Gastrocnemius medialis (tissue), 4 donors: ENCODE measurements at regions of chr6 and their contacts with region 1.

Region 1: GRCh38 chr6:139134817-139135581 is at the start of gene HECA:
- DNase-seq: peak; percentile 94 to 95
- ATAC-seq: peak; percentile 88 to 89
- H3K4me3 ChIP-seq: peak within 1 kb of the TSS; percentile 84 to 93 (median 88)
- H3K27ac ChIP-seq: peak within 1 kb of the TSS; percentile 92 to 96 (median 94)
- H3K4me1 ChIP-seq: peaks cover 34 to 37% of the 10 kb centered on the region in 2 donors
- H3K27me3 ChIP-seq: no peaks in the 10 kb centered on the region
- CTCF ChIP-seq: peak in 1 of 5 experiments; percentile 5
- POLR2A ChIP-seq: peak; percentile 88 to 97
- total RNA-seq, gene HECA: 34.5 to 59.1 (median 47.2) TPM

Region 2: GRCh38 chr6:139029470-139030210 is 105.4 kb before region 1 on chr6:
- in situ Hi-C with region 1: no loop called
- intact Hi-C with region 1: loop called (anchors 5 kb)
- DNase-seq: peak; percentile 20 to 34
- ATAC-seq: peak; percentile 51 to 73
- H3K4me3 ChIP-seq: peak overlapping the region; percentile 81 to 96 (median 89)
- H3K27ac ChIP-seq: peak overlapping the region; percentile 17 to 70 (median 62)
- H3K4me1 ChIP-seq: peaks cover 0 to 7% of the 10 kb centered on the region in 2 donors
- H3K27me3 ChIP-seq: no peaks in the 10 kb centered on the region
- CTCF ChIP-seq: no peak
- POLR2A ChIP-seq: no peak

Region 3: DNA sequence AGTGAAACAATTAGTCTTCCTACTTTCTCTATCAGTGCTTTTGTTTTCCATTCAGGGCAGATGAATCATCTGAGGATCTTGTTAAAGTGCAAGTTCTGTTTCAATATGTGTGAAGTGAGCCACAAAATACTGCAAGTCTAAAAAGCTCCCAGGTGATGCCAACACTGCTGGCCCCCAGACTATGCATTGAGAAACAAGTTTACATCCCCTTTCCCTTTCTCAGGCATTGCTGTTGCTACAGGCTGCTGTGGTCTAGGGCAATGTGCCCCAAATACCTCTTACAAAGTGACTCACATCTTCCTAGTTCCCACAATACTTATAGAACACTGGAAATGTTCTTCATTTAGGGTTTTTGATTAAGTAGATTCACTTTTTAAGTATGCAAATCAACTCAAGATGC is 74.7 kb before region 1 on chr6:
- in situ Hi-C with region 1: no loop called
- intact Hi-C with region 1: no loop called
- DNase-seq: no peak
- ATAC-seq: no peak
- H3K4me3 ChIP-seq: no peak overlapping the region
- H3K27ac ChIP-seq: no peak overlapping the region
- H3K4me1 ChIP-seq: peaks cover 5 to 6% of the 10 kb centered on the region in 2 donors
- H3K27me3 ChIP-seq: no peaks in the 10 kb centered on the region
- CTCF ChIP-seq: no peak
- POLR2A ChIP-seq: no peak

Region 4: DNA sequence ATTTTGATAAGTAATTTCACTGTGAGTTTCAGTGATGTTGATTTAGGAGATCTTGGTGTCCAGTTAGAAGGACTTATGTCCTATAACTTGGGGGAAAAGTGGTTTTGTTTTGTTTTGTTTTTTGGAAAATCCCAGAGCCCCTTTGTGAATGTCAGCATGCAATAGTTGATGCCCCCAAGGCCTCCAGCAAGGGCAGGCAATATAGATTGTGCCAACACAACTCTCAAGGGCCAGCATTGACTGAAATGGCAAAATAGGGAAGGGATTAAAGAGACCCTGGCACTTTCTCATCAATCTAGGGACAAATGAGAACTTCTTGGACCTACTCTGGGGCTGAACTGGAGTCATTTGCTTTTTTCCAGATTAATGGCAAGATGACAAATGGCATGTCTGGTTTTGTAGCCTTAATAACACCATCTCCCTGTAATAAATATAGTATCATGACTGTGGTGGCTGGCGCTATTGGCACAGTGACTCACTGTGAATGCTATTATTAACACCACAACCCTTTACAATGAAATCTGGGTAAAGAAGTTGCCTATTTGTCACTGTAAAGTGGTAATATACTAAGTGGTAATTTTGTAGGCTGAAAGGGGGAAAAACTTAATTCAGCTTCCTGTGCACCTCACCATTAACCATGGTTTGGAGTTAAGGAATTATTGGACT is 54.6 kb before region 1 on chr6:
- in situ Hi-C with region 1: no loop called
- intact Hi-C with region 1: loop called (anchors 5 kb)
- DNase-seq: peak; percentile 24 to 31
- ATAC-seq: peak; percentile 90 to 99
- H3K4me3 ChIP-seq: no peak overlapping the region
- H3K27ac ChIP-seq: peak overlapping the region; percentile 50 to 80 (median 70)
- H3K4me1 ChIP-seq: peaks cover 12 to 17% of the 10 kb centered on the region in 2 donors
- H3K27me3 ChIP-seq: no peaks in the 10 kb centered on the region
- CTCF ChIP-seq: no peak
- POLR2A ChIP-seq: no peak

Region 5: DNA sequence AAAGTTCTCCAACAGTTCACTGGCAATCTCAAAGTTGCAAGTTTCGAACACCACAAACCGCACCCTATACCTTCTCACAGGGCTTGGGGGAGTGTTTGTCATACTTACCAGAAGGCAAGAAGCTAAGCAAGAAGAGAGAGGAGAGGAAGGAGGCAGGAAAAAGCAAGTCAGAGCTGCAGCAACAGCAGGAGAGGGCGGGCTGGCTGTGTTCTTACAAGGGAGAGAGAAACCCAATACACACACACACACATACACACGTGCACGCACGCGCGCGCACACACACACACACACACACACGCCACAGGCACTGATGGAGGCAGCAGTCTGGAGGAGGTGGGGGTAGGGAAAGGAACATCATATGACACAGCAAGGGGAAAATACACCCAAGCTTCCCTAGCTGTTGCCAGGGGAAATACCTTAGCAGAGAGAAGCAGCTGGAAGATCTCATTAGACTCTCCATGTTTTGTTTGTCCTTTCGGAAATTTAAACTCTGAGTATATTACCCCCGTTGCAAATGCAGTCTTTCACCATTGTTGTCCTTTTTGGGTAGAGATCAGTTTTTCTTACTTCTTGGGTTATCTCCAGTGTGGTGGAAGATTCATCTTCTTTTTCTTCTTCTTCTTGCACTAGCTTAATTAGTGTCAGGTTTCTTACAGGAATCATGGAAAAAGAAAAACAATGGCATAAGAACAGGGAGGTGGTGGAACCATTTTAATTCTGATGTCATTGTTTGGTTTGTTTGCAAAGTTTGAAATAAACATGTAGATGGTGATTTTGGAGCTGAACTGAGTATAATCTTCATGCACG is 157.0 kb after region 1 on chr6 and contains the start of gene TXLNB:
- in situ Hi-C with region 1: no loop called
- intact Hi-C with region 1: loop called (anchors 2 kb)
- DNase-seq: peak; percentile 94 to 97
- ATAC-seq: peak; percentile 78 to 79
- H3K4me3 ChIP-seq: peak within 1 kb of the TSS; percentile 47 to 57 (median 50)
- H3K27ac ChIP-seq: peak within 1 kb of the TSS; percentile 92 to 96 (median 94)
- H3K4me1 ChIP-seq: peaks cover 32 to 40% of the 10 kb centered on the region in 2 donors
- H3K27me3 ChIP-seq: no peaks in the 10 kb centered on the region
- CTCF ChIP-seq: peak in 3 of 5 experiments; percentile 16 to 34 (median 24)
- POLR2A ChIP-seq: peak; percentile 70 to 83
- total RNA-seq, gene TXLNB: 58.3 to 197 (median 124) TPM

Region 6: DNA sequence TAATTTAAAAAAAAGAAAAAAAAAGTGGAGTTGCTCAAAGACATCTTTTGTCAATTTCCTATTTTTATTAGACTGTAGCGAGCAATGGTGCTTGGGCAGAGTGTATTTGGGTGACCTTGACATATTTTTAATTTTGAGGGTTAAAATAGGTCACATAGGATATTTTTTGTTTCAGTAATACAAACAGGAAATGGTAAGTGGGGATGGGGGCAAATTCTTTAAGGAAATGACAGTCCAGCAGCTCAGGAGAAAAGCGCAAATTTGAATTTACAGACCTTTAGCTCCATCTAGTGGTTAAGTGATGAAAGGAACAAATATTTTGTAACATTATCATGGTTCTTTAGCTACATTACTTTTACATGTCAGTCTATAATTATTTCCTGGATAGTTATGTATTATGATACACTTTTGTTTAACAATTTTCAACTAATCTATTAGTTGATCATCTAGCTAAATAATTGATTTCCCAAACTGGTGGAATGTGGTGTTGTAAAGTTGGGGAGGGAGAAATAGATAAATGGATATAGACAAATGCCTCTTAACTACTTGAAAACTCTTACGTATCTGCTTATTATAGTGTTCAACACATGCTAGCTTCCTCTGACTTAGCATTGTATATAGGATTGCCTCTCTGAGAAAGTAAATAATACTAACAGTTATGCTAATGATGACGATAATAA is 229.4 kb after region 1 on chr6:
- in situ Hi-C with region 1: loop called in 2 of 4 experiments (anchors 10 to 25 kb)
- intact Hi-C with region 1: no loop called
- DNase-seq: no peak
- ATAC-seq: peak; percentile 48 to 76
- H3K4me3 ChIP-seq: no peak overlapping the region
- H3K27ac ChIP-seq: peak overlapping the region in 2 of 4 donors; percentile 30 to 41
- H3K4me1 ChIP-seq: peaks cover 4 to 9% of the 10 kb centered on the region in 2 donors
- H3K27me3 ChIP-seq: no peaks in the 10 kb centered on the region
- CTCF ChIP-seq: peak; percentile 74 to 89 (median 85)
- POLR2A ChIP-seq: no peak

Region 7: GRCh38 chr6:139753198-139753861 is 618.3 kb after region 1 on chr6:
- in situ Hi-C with region 1: no loop called
- intact Hi-C with region 1: loop called (anchors 10 kb)
- DNase-seq: no peak
- ATAC-seq: no peak
- H3K4me3 ChIP-seq: no peak overlapping the region
- H3K27ac ChIP-seq: peak overlapping the region in 2 of 4 donors; percentile 93
- H3K4me1 ChIP-seq: peaks cover 49 to 54% of the 10 kb centered on the region in 2 donors
- H3K27me3 ChIP-seq: no peaks in the 10 kb centered on the region
- CTCF ChIP-seq: no peak
- POLR2A ChIP-seq: no peak